Left cardiac atrium (tissue), 4 donors: ENCODE measurements at regions of chr20 and their contacts with region 1.

Region 1: GRCh38 chr20:25178563-25179438 is 16.7 kb upstream of the ENTPD6 start:
- DNase-seq: peak; percentile 33
- ATAC-seq: peak; percentile 86 to 95

Region 2: GRCh38 chr20:25065625-25066338 is 113.0 kb before region 1 on chr20:
- intact Hi-C with region 1: loop called in 1 of 2 experiments (anchors 5 kb)
- DNase-seq: peak; percentile 55
- ATAC-seq: peak; percentile 77 to 88

Region 3: GRCh38 chr20:25081065-25081729 is 97.6 kb before region 1 on chr20:
- intact Hi-C with region 1: loop called (anchors 1 to 5 kb)
- DNase-seq: no peak
- ATAC-seq: peak; percentile 38 to 56

Region 4: DNA sequence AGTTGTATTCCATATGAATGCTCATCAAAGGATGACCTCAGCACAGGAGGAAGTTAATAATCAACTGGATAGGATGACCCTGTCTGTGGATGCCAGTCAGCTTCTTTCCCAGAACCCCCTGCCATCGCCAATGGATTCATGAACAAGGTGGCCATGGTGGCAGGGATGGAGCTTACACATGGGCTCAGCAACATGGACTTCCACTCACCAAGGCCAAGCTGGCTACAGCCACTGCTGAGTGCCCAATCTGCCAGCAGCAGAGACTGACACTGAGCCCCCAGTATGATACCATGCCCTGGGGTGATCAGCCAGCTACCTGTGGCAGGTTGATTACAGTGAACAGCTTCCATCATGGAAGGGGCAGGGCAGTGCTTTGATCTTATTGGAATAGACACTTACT is 52.2 kb before region 1 on chr20:
- intact Hi-C with region 1: no loop called
- DNase-seq: no peak
- ATAC-seq: no peak

Region 5: DNA sequence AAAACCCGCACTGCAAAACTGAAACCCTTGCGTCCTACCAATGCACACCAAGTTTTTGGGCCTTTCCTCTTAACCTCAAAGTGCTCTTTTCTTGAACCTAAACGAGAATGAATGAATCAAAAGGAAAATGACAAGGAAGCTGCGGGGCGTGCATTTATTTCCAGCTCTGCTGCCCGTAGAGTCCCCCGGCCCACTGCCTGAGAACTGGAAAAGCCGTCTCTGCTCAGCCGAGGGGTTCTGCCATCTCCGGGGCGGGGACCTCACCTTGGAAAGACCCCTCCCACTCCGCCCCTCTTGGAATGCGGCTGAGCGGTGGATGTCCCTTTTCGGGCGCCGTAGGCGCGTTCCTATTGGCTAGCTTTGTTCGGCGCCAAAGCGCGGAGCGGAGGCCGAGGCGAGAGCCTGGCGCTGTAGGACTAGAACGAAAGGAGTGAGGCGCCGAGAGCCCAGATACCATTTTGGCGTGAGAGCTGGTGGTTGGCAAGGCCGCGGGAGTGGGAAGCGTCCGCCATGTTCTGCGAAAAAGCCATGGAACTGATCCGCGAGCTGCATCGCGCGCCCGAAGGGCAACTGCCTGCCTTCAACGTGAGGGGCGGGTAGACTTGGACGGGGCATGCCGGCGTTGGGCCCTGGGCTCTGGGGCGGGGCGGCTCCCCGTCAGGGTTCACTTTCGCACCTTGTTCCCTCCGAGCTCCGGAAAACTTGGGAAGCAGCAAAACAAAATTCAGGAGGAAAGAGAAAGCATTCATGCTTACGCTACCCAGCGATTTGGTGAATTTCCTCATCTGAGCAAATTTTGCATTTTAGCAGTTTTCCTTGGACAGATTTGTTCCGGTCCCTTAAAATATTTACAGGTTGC is 228.7 kb after region 1 on chr20 and contains the start of gene GINS1:
- intact Hi-C with region 1: loop called in 1 of 2 experiments (anchors 10 kb)
- DNase-seq: peak; percentile 84
- ATAC-seq: peak; percentile 97
- total RNA-seq, gene GINS1: 0.73 to 1.6 TPM